ENCODE measurements at regions of chrX and their contacts with region 1.

Region 1: GRCh38 chrX:84907324-84907968 is 96.2 kb upstream of the APOOL start:
- DNase-seq: no peak
- ATAC-seq: no peak
- H3K4me3 ChIP-seq: no peak overlapping the region
- H3K4me1 ChIP-seq: no peaks in the 10 kb centered on the region
- CTCF ChIP-seq: no peak

Region 2: GRCh38 chrX:84501798-84502628 is 405.4 kb before region 1 on chrX and contains the start of gene HDX:
- intact Hi-C with region 1: no loop called
- DNase-seq: peak; percentile 83 to 92 (median 86)
- ATAC-seq: peak; percentile 99
- H3K4me3 ChIP-seq: no peak within 1 kb of the TSS
- H3K4me1 ChIP-seq: no peaks in the 10 kb centered on the region
- CTCF ChIP-seq: no peak
- total RNA-seq, gene HDX: 2.0 to 8.6 (median 2.3) TPM

Region 3: GRCh38 chrX:84729809-84730208 is 177.6 kb before region 1 on chrX:
- intact Hi-C with region 1: loop called in 1 of 2 experiments (anchors 5 kb)
- DNase-seq: peak in 2 of 3 donors; percentile 20 to 25
- ATAC-seq: peak; percentile 96
- H3K4me3 ChIP-seq: no peak overlapping the region
- H3K4me1 ChIP-seq: no peaks in the 10 kb centered on the region
- CTCF ChIP-seq: peak; percentile 27